ENCODE measurements at regions of chr5 and their contacts with region 1.

Region 1: DNA sequence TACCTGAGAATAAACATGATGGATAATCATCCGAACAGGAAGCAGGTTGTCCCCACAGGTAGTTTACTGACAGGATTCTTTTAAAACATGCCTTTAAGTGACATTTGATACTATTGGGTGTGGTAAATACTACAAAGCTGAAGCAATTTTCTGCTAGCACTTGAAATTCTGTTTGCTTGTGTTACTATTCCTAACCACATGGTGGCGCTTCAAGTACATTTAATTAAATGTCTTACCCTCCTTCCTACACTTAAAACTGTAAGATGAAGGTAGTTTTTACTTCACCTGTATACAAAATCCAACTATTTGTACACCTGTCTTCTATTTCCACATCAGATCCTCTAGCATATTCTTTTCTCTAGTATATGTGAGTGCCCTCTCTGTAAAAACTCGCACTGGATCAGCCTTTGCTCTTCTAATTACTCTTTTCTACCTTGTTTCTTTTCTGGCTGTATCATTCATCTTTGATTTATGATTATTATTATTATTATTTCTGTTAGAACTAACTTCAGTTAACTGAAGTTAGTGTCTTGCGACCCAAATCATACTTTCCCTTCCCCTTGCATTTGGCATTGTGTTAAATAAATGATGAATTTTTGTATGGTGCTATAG is 18.4 kb downstream of the SLC25A46 start:
- DNase-seq: peak; percentile 60
- ATAC-seq: peak; percentile 63; the same call in 1 of the 2 replicates
- H3K4me3 ChIP-seq: no peak overlapping the region
- H3K27ac ChIP-seq: no peak overlapping the region
- H3K4me1 ChIP-seq: no peaks in the 10 kb centered on the region
- H3K27me3 ChIP-seq: no peaks in the 10 kb centered on the region
- CTCF ChIP-seq: peak; percentile 72
- POLR2A ChIP-seq: no peak
- RAD21 ChIP-seq: peak; percentile 70

Region 2: GRCh38 chr5:111092062-111092853 is 335.0 kb after region 1 on chr5 and contains the start of gene WDR36:
- CTCF ChIA-PET with region 1: no interaction called
- POLR2A ChIA-PET with region 1: no interaction called
- dilution Hi-C with region 1: no loop called
- in situ Hi-C with region 1: loop called (anchors 10 kb)
- intact Hi-C with region 1: loop called (anchors 5 kb)
- DNase-seq: peak; percentile 92
- ATAC-seq: peak; percentile 98
- H3K4me3 ChIP-seq: peak within 1 kb of the TSS; percentile 87
- H3K27ac ChIP-seq: peak within 1 kb of the TSS; percentile 87
- H3K4me1 ChIP-seq: peaks cover 4% of the 10 kb centered on the region; the same call in 1 of the 2 replicates
- H3K27me3 ChIP-seq: no peaks in the 10 kb centered on the region
- CTCF ChIP-seq: no peak
- POLR2A ChIP-seq: peak; percentile 68; the same call in 1 of the 2 replicates
- RAD21 ChIP-seq: 0 out of 2 replicates have a peak, but pooled peaks have one; percentile 16
- total RNA-seq, gene WDR36: 87.8 and 111 TPM in 2 replicates

Region 3: GRCh38 chr5:111107371-111107770 is 350.1 kb after region 1 on chr5:
- CTCF ChIA-PET with region 1: no interaction called
- POLR2A ChIA-PET with region 1: no interaction called
- dilution Hi-C with region 1: no loop called
- in situ Hi-C with region 1: no loop called
- intact Hi-C with region 1: loop called (anchors 2 kb)
- DNase-seq: peak; percentile 35
- ATAC-seq: no peak; the same call in 1 of the 2 replicates
- H3K4me3 ChIP-seq: no peak overlapping the region
- H3K27ac ChIP-seq: no peak overlapping the region
- H3K4me1 ChIP-seq: no peaks in the 10 kb centered on the region
- H3K27me3 ChIP-seq: no peaks in the 10 kb centered on the region
- CTCF ChIP-seq: no peak
- POLR2A ChIP-seq: no peak
- RAD21 ChIP-seq: no peak

Region 4: DNA sequence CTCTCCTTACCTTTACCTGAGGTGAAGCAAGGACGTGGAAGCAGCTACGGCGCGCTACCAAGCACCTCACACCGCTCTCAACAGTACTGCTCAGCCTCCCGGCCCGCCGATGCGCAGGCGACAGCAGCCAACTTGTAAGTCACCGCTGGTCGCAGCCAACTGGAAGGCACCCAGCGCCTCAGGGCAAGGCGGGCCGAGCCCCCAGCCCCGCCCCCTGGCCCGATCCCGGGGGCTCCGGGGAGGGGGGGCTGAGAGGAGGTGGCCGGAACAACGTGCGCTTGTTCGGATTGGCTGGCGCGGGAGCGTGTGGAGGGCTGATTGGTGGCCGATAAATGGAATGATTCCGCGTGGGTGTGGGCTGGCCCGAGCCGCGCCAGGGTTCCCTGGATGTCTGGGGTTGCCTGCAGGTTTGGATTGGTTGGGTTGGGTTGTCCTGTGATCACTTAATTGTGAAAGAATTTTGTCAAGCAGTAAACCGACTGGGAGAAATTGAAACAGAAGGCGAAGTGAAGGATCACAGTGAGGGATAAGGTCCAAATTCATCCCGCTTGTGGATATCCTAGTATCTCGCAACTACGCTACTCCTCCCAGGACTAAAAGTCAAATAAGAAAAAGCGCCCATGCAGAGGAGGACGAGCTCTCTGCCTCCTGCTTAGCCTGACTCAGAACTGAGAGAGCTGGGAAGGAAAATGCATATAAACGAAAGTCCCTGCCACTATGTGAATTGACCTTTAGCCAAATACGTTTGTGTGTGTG is 755.3 kb after region 1 on chr5 and contains the start of gene STARD4:
- CTCF ChIA-PET with region 1: no interaction called
- POLR2A ChIA-PET with region 1: no interaction called
- dilution Hi-C with region 1: no loop called
- in situ Hi-C with region 1: no loop called
- intact Hi-C with region 1: loop called (anchors 10 kb)
- DNase-seq: peak; percentile 92
- ATAC-seq: peak; percentile 97
- H3K4me3 ChIP-seq: peak within 1 kb of the TSS; percentile 74
- H3K27ac ChIP-seq: peak within 1 kb of the TSS; percentile 56
- H3K4me1 ChIP-seq: no peaks in the 10 kb centered on the region
- H3K27me3 ChIP-seq: no peaks in the 10 kb centered on the region
- CTCF ChIP-seq: no peak
- POLR2A ChIP-seq: peak; percentile 58; the same call in 1 of the 2 replicates
- RAD21 ChIP-seq: no peak
- total RNA-seq, gene STARD4: 30.3 and 63.0 TPM in 2 replicates

Measured in IMR-90 (cell line).